ENCODE measurements at regions of chr2 and their contacts with region 1.

Region 1: GRCh38 chr2:230202430-230203109 is 17.2 kb downstream of the SP110 start:
- DNase-seq: peak; percentile 49
- CTCF ChIP-seq: peak; percentile 52

Region 2: GRCh38 chr2:229856413-229856812 is 346.2 kb before region 1 on chr2:
- in situ Hi-C with region 1: no loop called
- DNase-seq: peak; percentile 62
- CTCF ChIP-seq: no peak

Region 3: DNA sequence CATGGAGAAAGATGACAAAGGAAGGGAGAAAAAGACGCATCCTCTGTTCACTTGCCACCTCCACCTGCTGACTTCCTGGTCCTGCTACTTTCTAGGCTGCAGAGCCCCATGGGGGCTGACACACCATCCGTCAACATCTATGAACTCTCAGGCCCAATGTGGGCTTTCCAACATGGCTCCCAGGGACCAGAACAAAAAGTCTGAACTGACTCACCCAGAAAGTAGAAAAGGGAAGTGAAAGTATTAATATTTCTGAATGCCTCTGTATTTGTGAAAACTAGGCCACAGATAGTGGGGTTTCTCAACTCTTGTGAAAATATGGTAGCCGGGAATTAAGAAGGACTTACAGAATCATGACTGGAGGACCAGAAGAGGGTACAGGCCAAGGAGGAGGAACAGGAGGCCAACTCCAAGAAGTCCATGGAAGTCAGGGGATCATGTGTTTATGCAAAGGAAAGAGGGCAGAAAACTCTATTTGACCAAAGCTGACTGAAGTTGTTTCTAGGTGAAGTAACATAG is 387.0 kb after region 1 on chr2:
- in situ Hi-C with region 1: loop called (anchors 10 kb)
- DNase-seq: peak; percentile 69
- CTCF ChIP-seq: no peak